ENCODE measurements at regions of chr6 and their contacts with region 1.

Region 1: DNA sequence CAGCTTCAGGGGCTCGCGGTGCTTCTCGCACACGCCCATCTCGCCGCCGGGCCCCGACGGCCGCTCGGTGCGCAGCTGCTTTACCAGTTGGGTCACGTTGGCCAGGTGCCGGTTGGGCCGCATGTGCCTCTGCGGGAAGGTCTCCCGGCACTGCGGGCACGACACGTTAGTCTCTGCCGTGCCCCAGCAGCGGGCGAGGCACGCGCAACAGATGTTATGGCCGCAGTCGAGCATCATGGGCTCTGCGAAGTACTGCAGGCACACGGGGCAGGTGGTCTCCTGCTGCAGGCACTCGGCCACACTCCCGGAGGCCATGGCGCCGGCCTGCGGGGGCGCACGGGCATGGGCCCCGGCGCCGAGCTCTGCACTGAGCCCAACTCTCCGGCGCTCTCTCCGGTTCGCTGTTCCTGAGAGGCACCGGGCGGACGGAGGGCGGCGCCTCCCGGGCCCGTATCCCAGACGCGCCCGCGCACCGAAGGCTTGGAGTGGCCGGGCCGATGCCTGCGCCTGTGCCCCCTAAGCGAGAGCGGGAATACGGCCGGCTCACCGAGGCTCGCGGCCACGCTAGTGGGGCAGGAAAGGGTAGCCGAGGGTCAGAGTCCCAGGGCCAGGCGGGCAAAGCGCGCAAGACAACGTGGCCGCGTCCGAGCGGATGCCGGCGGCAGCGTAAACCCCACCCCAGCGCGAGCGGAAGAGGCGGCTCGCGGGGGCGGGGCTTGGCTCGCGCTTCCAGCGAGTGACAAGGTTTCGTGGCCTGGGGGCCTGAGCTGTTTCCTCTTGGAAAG is at the start of gene TRIM27:
- DNase-seq: peak; percentile 57
- ATAC-seq: peak; percentile 89
- H3K4me3 ChIP-seq: peak within 1 kb of the TSS; percentile 95 to 99
- H3K27ac ChIP-seq: peak within 1 kb of the TSS; percentile 98
- H3K4me1 ChIP-seq: peaks cover 14 to 27% of the 10 kb centered on the region in 2 experiments
- H3K27me3 ChIP-seq: no peaks in the 10 kb centered on the region
- CTCF ChIP-seq: no peak
- POLR2A ChIP-seq: peak; percentile 90
- RAD21 ChIP-seq: 0 out of 2 replicates have a peak, but pooled peaks have one; percentile 9
- total RNA-seq, gene TRIM27: 62.5 TPM

Region 2: DNA sequence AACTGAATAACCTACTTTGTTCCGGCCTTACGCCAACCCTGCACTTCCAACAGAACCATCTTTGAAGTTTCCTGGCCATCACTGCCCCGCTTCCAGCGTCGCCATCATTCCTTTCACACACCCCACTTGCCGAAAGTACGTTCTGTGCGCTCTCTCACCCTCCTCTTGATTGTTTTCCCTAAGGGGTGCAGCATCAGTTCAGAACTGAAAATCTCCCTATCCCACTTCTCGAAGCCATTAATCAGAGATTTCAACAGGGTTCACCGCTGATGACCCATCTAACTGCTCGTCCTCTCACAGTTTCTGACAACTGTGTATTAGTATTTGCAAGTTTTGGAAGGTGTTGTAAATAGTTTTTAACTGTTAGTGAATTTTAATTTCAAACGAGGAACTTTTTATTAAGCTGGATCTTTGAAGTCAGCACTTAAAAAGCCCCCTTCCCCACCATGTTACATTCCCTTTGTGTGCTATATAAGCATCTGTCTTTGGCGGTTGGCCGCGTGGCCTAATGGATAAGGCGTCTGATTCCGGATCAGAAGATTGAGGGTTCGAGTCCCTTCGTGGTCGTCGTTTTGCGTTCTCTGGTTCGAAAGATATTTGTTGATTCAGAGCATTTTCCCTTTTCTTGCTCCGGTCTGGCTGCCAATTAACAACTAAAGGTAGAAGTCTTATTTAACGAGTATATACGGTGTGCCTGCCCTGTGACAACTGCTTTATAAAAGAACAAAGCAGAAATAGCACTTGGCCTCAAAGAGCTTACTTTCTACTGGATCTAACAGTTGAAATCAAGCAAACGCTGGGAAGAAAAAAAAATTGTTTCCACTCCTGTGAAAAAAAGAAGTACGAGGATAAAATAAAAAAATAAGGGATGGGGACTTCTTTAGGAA is 42.4 kb before region 1 on chr6:
- CTCF ChIA-PET with region 1: no interaction called
- POLR2A ChIA-PET with region 1: no interaction called
- RAD21 ChIA-PET with region 1: no interaction called
- intact Hi-C with region 1: no loop called
- DNase-seq: peak; percentile 62
- ATAC-seq: peak; percentile 88
- H3K4me3 ChIP-seq: no peak overlapping the region
- H3K27ac ChIP-seq: no peak overlapping the region
- H3K4me1 ChIP-seq: peaks cover 0 to 4% of the 10 kb centered on the region in 2 experiments; a peak in 2 of 4 replicates
- H3K27me3 ChIP-seq: no peaks in the 10 kb centered on the region
- CTCF ChIP-seq: no peak
- POLR2A ChIP-seq: no peak
- RAD21 ChIP-seq: no peak

Region 3: DNA sequence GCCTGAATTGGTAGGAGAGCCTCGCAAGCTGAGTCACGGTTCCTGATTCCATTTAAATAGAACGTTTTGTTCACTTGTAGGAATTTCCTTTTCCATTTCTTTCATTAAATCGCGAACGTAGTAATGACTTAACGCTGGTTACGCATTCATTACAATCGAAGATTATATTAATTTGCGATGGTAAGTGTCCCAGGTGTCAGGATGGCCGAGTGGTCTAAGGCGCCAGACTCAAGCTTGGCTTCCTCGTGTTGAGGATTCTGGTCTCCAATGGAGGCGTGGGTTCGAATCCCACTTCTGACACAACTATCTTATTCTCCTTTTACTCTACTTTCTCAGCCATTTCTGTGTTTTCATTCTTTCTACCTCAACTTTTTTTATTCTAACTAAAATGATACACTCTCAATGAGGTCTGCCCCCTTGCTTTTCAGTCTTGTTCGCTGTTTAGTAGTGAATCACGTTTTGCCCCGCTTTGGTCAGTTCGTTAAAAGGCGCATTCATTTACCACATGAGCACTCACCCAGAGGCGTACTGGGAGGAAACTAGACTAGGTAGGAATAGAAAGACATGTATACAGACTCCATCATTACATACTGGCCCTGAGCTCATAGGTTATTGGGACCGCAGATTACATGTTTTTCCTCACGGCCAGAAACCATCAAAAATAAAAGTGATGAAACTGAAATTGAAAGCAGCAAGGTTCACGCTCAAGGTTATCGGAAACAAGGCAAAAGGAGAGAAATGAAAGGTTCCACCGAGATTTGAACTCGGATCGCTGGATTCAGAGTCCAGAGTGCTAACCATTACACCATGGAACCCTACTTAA is 17.6 kb after region 1 on chr6:
- CTCF ChIA-PET with region 1: interaction called, 9 read pairs
- POLR2A ChIA-PET with region 1: interaction called, 18 read pairs
- RAD21 ChIA-PET with region 1: no interaction called
- intact Hi-C with region 1: loop called (anchors 2 kb)
- DNase-seq: peak; percentile 79
- ATAC-seq: peak; percentile 74
- H3K4me3 ChIP-seq: peak overlapping the region; percentile 42 to 65
- H3K27ac ChIP-seq: peak overlapping the region; percentile 51
- H3K4me1 ChIP-seq: peaks cover 11 to 43% of the 10 kb centered on the region in 2 experiments; a peak in 3 of 4 replicates
- H3K27me3 ChIP-seq: no peaks in the 10 kb centered on the region
- CTCF ChIP-seq: 0 out of 6 replicates have a peak, but pooled peaks of 1 of the 3 experiments have one; percentile 15
- POLR2A ChIP-seq: peak; percentile 25
- RAD21 ChIP-seq: no peak

Region 4: DNA sequence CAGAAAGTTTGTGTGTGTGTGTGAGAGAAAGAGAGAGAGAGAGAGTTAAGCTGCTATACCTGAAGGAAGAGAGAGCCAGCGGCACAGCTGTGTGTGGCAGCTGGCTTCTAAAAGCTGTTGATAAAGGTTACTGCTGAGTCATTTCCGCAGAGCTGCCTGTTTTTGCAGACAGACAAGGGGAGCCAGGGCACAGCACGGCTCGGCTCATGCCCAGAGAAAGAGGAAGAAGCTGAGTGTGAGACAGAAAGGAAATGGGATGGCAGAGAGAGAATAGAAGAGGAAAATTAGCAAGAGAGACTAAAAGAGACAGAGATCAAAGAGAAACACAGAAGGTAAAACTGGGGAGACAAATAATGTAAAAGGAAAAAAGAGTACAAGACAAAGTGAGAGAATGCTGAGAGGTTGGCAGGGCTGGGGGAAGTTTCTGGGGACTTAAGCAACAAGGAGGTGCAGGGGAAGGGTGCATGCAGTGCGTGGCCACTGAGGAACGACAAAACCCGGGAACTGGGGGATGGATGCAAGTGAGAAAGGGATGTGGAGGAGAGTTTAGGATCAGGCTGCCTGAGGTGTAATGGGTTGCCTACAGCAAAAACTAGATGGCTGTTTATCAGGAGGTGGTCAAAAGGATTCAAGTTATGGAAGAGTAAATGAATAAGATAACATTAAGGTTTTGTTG is 1041.5 kb after region 1 on chr6:
- CTCF ChIA-PET with region 1: no interaction called
- POLR2A ChIA-PET with region 1: no interaction called
- RAD21 ChIA-PET with region 1: no interaction called
- intact Hi-C with region 1: loop called (anchors 5 kb)
- DNase-seq: peak; percentile 73
- ATAC-seq: peak; percentile 76
- H3K4me3 ChIP-seq: peak overlapping the region; percentile 47 to 50
- H3K27ac ChIP-seq: peak overlapping the region; percentile 86
- H3K4me1 ChIP-seq: peaks cover 41 to 62% of the 10 kb centered on the region in 2 experiments
- H3K27me3 ChIP-seq: no peaks in the 10 kb centered on the region
- CTCF ChIP-seq: no peak
- POLR2A ChIP-seq: no peak
- RAD21 ChIP-seq: peak; percentile 34; the same call in 1 of the 2 replicates

Measured in HCT116 (cell line).